Thyroid gland (tissue), 4 donors: ENCODE measurements at regions of chr3 and their contacts with region 1.

Region 1: DNA sequence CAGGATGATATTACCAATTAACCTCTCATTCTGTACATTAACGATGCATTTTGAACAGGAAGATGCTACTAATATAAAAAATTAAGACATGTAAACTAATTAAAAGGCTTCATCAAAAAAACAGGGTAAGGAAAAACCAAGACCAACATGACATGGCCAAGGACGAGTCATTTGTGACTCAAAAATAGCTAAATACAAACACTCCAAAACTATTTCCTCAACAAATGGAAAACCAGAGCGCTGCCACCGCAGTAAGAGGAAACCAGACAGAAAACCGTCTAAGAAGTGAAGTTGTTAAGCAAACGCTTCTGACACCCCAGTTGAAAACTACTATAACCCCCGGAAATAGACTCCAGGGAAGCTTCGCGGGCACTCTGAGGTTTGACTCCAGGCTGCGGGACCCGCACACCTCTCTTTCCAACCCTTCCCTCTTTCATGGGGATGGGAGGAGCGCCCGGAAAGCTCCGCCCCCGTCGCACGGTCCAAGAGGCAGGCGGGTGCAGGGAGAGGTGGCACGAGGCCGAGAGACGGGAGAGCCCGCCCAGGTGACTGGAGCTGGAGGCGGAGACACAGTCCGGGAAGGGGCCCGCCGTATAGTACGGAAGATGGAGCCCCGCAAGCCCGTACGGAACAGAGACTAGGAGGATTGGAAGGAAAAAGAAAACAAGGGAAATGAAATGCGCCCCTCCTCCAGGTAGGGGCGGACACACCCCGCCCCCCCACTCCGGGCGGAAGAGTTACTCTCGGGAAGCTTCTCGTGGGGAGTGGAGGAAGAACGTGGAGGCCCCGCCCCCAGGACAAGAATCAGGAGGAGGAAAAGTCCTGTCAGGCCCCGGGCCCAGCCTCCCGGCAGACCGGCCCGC is 708 bp downstream of the DCAF1 start:
- DNase-seq: peak; percentile 98
- H3K4me3 ChIP-seq: peak overlapping the region; percentile 26 to 65 (median 65)
- H3K27ac ChIP-seq: peak overlapping the region; percentile 76 to 95 (median 95)
- H3K4me1 ChIP-seq: peaks cover 7 to 11% of the 10 kb centered on the region in 2 donors
- H3K27me3 ChIP-seq: no peaks in the 10 kb centered on the region
- CTCF ChIP-seq: no peak
- POLR2A ChIP-seq: peak in 1 of 2 donors; percentile 50

Region 2: GRCh38 chr3:50611464-50612233 is 887.5 kb before region 1 on chr3 and contains the start of gene CISH:
- intact Hi-C with region 1: loop called (anchors 5 kb)
- DNase-seq: peak; percentile 98 to 99
- H3K4me3 ChIP-seq: peak within 1 kb of the TSS; percentile 69 to 96 (median 82)
- H3K27ac ChIP-seq: peak within 1 kb of the TSS; percentile 99 to 100 (median 100)
- H3K4me1 ChIP-seq: peaks cover 41 to 59% of the 10 kb centered on the region in 2 donors
- H3K27me3 ChIP-seq: no peaks in the 10 kb centered on the region
- CTCF ChIP-seq: peak in 3 of 6 experiments; percentile 14 to 30 (median 28)
- POLR2A ChIP-seq: peak; percentile 86 to 95
- total RNA-seq, gene CISH: 31.0 to 78.1 (median 48.0) TPM

Region 3: GRCh38 chr3:51391075-51391567 is 108.0 kb before region 1 on chr3 and contains the start of gene RBM15B:
- intact Hi-C with region 1: loop called (anchors 5 kb)
- DNase-seq: peak; percentile 98 to 99
- H3K4me3 ChIP-seq: peak within 1 kb of the TSS; percentile 32 to 71 (median 51)
- H3K27ac ChIP-seq: peak within 1 kb of the TSS; percentile 49 to 68 (median 61)
- H3K4me1 ChIP-seq: peaks cover 48 to 75% of the 10 kb centered on the region in 2 donors
- H3K27me3 ChIP-seq: no peaks in the 10 kb centered on the region
- CTCF ChIP-seq: peak in 5 of 6 experiments; percentile 77 to 96 (median 93)
- POLR2A ChIP-seq: peak in 1 of 2 donors; percentile 72
- total RNA-seq, gene RBM15B: 29.4 to 50.0 (median 38.9) TPM

Region 4: GRCh38 chr3:51591231-51591630 is 92.1 kb after region 1 on chr3:
- intact Hi-C with region 1: no loop called
- DNase-seq: no peak
- H3K4me3 ChIP-seq: no peak overlapping the region
- H3K27ac ChIP-seq: no peak overlapping the region
- H3K4me1 ChIP-seq: peaks cover 0 to 12% of the 10 kb centered on the region in 2 donors
- H3K27me3 ChIP-seq: no peaks in the 10 kb centered on the region
- CTCF ChIP-seq: no peak
- POLR2A ChIP-seq: no peak

Region 5: GRCh38 chr3:51670823-51671733 is 172.0 kb after region 1 on chr3 and contains the start of gene TEX264:
- intact Hi-C with region 1: loop called (anchors 2 kb)
- DNase-seq: peak; percentile 89 to 91
- H3K4me3 ChIP-seq: peak within 1 kb of the TSS; percentile 84 to 94 (median 84)
- H3K27ac ChIP-seq: peak within 1 kb of the TSS; percentile 92 to 94 (median 93)
- H3K4me1 ChIP-seq: peaks cover 14 to 56% of the 10 kb centered on the region in 2 donors
- H3K27me3 ChIP-seq: no peaks in the 10 kb centered on the region
- CTCF ChIP-seq: no peak
- POLR2A ChIP-seq: peak in 1 of 2 donors; percentile 88
- total RNA-seq, gene TEX264: 74.3 to 135 (median 122) TPM

Region 6: DNA sequence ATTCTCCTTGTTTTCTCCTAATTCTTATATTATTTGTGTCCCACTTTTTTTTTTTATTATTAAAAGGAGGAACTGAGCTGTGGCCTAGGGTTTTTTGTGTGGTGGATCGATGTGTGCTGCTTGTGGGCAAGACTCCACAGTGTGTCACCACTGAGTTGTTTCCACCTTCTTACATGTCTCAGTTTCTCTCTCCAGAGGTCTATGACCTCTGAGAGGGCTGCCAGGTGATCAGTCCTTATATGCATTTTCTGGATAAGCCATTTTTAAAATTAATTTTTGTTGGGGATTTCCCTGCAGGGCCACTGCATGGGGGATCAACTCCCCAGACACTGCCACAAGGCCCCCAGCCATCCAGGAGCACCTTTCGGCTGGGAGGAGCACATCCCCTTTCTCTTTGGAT is 252.2 kb after region 1 on chr3:
- intact Hi-C with region 1: no loop called
- DNase-seq: no peak
- H3K4me3 ChIP-seq: no peak overlapping the region
- H3K27ac ChIP-seq: no peak overlapping the region
- H3K4me1 ChIP-seq: no peaks in the 10 kb centered on the region
- H3K27me3 ChIP-seq: no peaks in the 10 kb centered on the region
- CTCF ChIP-seq: no peak
- POLR2A ChIP-seq: no peak

Region 7: GRCh38 chr3:51799879-51800749 is 301.0 kb after region 1 on chr3:
- intact Hi-C with region 1: loop called (anchors 5 kb)
- DNase-seq: no peak
- H3K4me3 ChIP-seq: no peak overlapping the region
- H3K27ac ChIP-seq: no peak overlapping the region
- H3K4me1 ChIP-seq: no peaks in the 10 kb centered on the region
- H3K27me3 ChIP-seq: no peaks in the 10 kb centered on the region
- CTCF ChIP-seq: peak; percentile 44 to 78 (median 72)
- POLR2A ChIP-seq: no peak